HCT116 (cell line): ENCODE measurements at regions of chr4 and their contacts with region 1.

Region 1: DNA sequence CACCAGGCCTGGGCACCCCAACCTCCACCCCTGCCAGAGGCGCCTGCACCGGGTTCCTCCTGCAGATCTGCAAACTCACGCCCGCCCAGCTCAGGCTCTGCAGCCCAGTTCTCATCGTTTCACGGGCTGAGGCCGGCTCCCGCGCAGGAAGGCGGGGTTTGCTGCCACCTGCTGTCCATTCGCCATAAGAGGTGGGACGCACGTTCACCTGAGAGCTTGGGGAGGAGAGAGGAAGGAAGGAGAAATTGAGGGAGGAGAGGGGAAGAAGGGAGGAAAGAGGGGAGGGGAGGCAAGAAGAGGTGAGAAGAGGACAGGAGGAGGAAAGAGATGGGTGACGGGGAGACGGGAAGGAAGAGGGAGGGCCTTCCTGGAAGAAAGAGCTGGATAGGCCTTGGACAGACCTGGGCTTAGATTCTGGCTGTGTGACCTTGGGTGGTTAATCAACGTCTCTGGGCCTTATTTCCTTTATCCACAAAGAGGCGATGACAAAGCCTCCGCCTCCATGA is 114.5 kb downstream of the ADRA2C start:
- DNase-seq: peak; percentile 35
- ATAC-seq: peak; percentile 99
- H3K4me3 ChIP-seq: no peak overlapping the region
- H3K27ac ChIP-seq: no peak overlapping the region
- H3K4me1 ChIP-seq: 0 out of 4 replicates have a peak, but pooled peaks cover 0 to 5% of the 10 kb centered on the region in 2 experiments
- H3K27me3 ChIP-seq: 0 out of 2 replicates have a peak, but pooled peaks cover 4% of the 10 kb centered on the region
- CTCF ChIP-seq: peak; percentile 77 to 82 (median 81); a peak in 5 of 6 replicates
- POLR2A ChIP-seq: no peak
- RAD21 ChIP-seq: peak; percentile 93

Region 2: GRCh38 chr4:3346146-3346545 is 534.5 kb before region 1 on chr4:
- CTCF ChIA-PET with region 1: interaction called, 5 read pairs
- POLR2A ChIA-PET with region 1: no interaction called
- RAD21 ChIA-PET with region 1: no interaction called
- intact Hi-C with region 1: loop called (anchors 10 kb)
- DNase-seq: peak; percentile 47
- ATAC-seq: peak; percentile 96
- H3K4me3 ChIP-seq: no peak overlapping the region
- H3K27ac ChIP-seq: no peak overlapping the region
- H3K4me1 ChIP-seq: no peaks in the 10 kb centered on the region
- H3K27me3 ChIP-seq: no peaks in the 10 kb centered on the region
- CTCF ChIP-seq: peak; percentile 76 to 90 (median 80)
- POLR2A ChIP-seq: no peak
- RAD21 ChIP-seq: peak; percentile 82

Region 3: GRCh38 chr4:3563403-3563802 is 317.3 kb before region 1 on chr4:
- CTCF ChIA-PET with region 1: no interaction called
- POLR2A ChIA-PET with region 1: no interaction called
- RAD21 ChIA-PET with region 1: no interaction called
- intact Hi-C with region 1: loop called (anchors 10 kb)
- DNase-seq: no peak
- ATAC-seq: no peak
- H3K4me3 ChIP-seq: no peak overlapping the region
- H3K27ac ChIP-seq: no peak overlapping the region
- H3K4me1 ChIP-seq: no peaks in the 10 kb centered on the region
- H3K27me3 ChIP-seq: peaks cover 4% of the 10 kb centered on the region; the same call in 1 of the 2 replicates
- CTCF ChIP-seq: no peak
- POLR2A ChIP-seq: no peak
- RAD21 ChIP-seq: no peak

Region 4: GRCh38 chr4:3765271-3766040 is 115.2 kb before region 1 on chr4:
- CTCF ChIA-PET with region 1: interaction called, 13 read pairs
- POLR2A ChIA-PET with region 1: no interaction called
- RAD21 ChIA-PET with region 1: interaction called, 4 to 5 read pairs
- intact Hi-C with region 1: no loop called
- DNase-seq: no peak
- ATAC-seq: peak; percentile 85
- H3K4me3 ChIP-seq: peak overlapping the region; percentile 41 to 60
- H3K27ac ChIP-seq: peak overlapping the region; percentile 88
- H3K4me1 ChIP-seq: peaks cover 8 to 13% of the 10 kb centered on the region in 2 experiments; a peak in 2 of 4 replicates
- H3K27me3 ChIP-seq: no peaks in the 10 kb centered on the region
- CTCF ChIP-seq: peak in 2 of 3 experiments; percentile 6 to 29; a peak in 2 of 6 replicates
- POLR2A ChIP-seq: peak; percentile 38
- RAD21 ChIP-seq: no peak

Region 5: GRCh38 chr4:3863841-3864742 is 16.6 kb before region 1 on chr4:
- CTCF ChIA-PET with region 1: interaction called, 9 read pairs
- POLR2A ChIA-PET with region 1: no interaction called
- RAD21 ChIA-PET with region 1: interaction called in 1 of 2 experiments, 12 read pairs
- intact Hi-C with region 1: no loop called
- DNase-seq: no peak
- ATAC-seq: no peak
- H3K4me3 ChIP-seq: no peak overlapping the region
- H3K27ac ChIP-seq: no peak overlapping the region
- H3K4me1 ChIP-seq: peaks cover 3 to 10% of the 10 kb centered on the region in 2 experiments; a peak in 2 of 4 replicates
- H3K27me3 ChIP-seq: peaks cover 7% of the 10 kb centered on the region
- CTCF ChIP-seq: no peak
- POLR2A ChIP-seq: no peak
- RAD21 ChIP-seq: no peak

Region 6: GRCh38 chr4:4269856-4270255 is 389.2 kb after region 1 on chr4:
- CTCF ChIA-PET with region 1: no interaction called
- POLR2A ChIA-PET with region 1: no interaction called
- RAD21 ChIA-PET with region 1: no interaction called
- intact Hi-C with region 1: no loop called
- DNase-seq: no peak
- ATAC-seq: no peak
- H3K4me3 ChIP-seq: no peak overlapping the region
- H3K27ac ChIP-seq: no peak overlapping the region
- H3K4me1 ChIP-seq: no peaks in the 10 kb centered on the region
- H3K27me3 ChIP-seq: no peaks in the 10 kb centered on the region
- CTCF ChIP-seq: no peak
- POLR2A ChIP-seq: no peak
- RAD21 ChIP-seq: no peak

Region 7: DNA sequence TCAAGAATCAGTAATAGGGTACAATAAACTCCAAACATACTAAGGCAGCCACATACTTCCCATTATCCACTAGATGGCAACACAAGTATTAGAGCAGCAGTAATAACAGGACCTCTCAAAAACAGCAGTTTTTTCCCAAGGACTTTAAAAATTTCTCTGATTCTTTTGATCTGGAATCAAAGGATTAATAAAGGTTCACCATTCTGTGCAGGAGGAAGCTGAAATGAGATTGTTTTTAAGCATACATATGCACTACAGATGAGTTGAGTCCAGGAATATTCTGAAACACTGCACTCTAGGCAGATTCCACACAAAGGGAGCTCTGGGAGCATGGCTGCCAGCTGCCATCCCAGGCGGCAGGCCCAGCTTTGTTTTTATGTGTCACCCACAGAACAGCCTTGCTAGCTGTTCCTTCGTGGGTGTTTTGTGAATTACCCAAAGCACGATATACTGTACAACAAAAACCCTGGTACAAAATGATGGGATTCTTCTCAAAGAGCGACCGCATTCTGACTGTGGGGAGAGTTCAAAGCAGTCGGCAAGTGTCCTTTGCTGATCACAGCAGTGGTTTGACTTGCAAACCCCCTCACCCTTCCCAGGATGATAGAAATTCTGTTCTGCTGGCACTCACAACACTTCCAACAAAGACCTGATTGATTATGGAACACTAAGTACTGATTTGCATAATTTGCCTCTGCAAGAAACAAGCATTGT is 600.2 kb after region 1 on chr4:
- CTCF ChIA-PET with region 1: no interaction called
- POLR2A ChIA-PET with region 1: no interaction called
- RAD21 ChIA-PET with region 1: no interaction called
- intact Hi-C with region 1: no loop called
- DNase-seq: no peak
- ATAC-seq: peak; percentile 70
- H3K4me3 ChIP-seq: no peak overlapping the region
- H3K27ac ChIP-seq: no peak overlapping the region
- H3K4me1 ChIP-seq: no peaks in the 10 kb centered on the region
- H3K27me3 ChIP-seq: no peaks in the 10 kb centered on the region
- CTCF ChIP-seq: peak; percentile 32 to 59 (median 51); a peak in 5 of 6 replicates
- POLR2A ChIP-seq: no peak
- RAD21 ChIP-seq: peak; percentile 54